Activated CD4-positive, alpha-beta memory T cell treated with anti-CD3 and anti-CD28 coated beads for 36 hours (primary cell): ENCODE measurements at regions of chr18 and their contacts with region 1.

Region 1: GRCh38 chr18:44725300-44726096 is 44.8 kb downstream of the SETBP1 start:
- DNase-seq: peak; percentile 83
- H3K4me3 Mint-ChIP-seq: peak overlapping the region; percentile 27
- H3K27ac Mint-ChIP-seq: peak overlapping the region; percentile 81
- H3K4me1 Mint-ChIP-seq: peaks cover 78% of the 10 kb centered on the region
- H3K27me3 Mint-ChIP-seq: no peaks in the 10 kb centered on the region

Region 2: DNA sequence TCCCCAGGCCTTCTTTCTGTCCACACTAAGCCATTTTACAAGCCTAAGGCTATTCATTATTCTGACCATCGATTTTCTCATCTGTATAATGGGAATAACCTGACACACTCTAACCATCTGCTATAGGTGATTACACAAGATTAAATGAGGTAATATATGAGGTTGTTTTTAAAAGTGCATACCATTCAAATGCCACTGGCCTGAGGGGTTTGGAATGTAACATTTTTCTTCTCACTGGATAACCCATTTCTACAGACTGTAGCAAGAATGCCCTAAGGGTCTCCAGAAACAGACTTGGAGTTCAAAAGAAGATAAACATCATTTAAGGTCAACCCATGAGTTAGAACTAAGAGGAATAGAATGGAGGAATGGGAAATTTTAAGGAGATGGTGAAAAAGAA is 156.5 kb before region 1 on chr18:
- CTCF ChIA-PET with region 1: no interaction called
- POLR2A ChIA-PET with region 1: no interaction called
- intact Hi-C with region 1: no loop called
- DNase-seq: no peak
- H3K4me3 Mint-ChIP-seq: no peak overlapping the region
- H3K27ac Mint-ChIP-seq: no peak overlapping the region
- H3K4me1 Mint-ChIP-seq: no peaks in the 10 kb centered on the region
- H3K27me3 Mint-ChIP-seq: peaks cover 4% of the 10 kb centered on the region

Region 3: GRCh38 chr18:44672506-44673051 is 52.9 kb before region 1 on chr18:
- CTCF ChIA-PET with region 1: no interaction called
- POLR2A ChIA-PET with region 1: no interaction called
- intact Hi-C with region 1: no loop called
- DNase-seq: no peak
- H3K4me3 Mint-ChIP-seq: no peak overlapping the region
- H3K27ac Mint-ChIP-seq: no peak overlapping the region
- H3K4me1 Mint-ChIP-seq: no peaks in the 10 kb centered on the region
- H3K27me3 Mint-ChIP-seq: peaks cover 51% of the 10 kb centered on the region

Region 4: DNA sequence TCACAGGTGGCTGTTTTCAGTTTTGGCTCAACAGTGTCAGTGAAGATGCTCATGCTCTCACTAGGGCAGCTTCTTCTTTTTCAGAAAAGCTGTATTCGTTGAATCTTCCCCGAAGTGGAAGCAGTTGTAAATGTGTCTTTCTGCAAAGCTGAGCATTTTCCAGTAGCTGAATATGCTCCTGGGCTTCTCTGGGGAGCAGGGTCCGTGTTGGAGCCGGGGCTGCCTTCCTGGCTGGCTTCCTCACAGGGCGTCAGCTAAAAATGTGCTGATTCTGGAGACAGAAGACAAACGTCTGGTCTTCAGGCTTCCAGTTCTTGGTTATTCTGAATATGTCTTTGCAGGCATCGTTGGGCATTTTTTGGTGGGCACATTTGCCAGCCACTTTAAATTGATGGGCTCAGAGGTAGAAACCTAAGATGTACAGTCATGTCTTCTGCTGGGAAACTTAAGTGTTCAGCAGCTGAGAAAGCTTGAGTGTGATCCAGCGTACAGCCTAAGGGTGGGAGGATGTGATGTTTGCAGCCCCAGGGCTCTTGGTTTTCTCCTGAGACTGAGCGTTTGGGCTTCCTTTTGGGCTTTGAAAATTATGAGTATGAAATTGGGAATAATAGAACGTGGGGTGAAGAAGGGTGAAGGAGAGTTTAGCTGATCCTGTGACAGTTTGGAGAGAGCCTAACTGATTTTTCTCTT is 25.8 kb before region 1 on chr18:
- CTCF ChIA-PET with region 1: interaction called, 8 read pairs
- POLR2A ChIA-PET with region 1: interaction called, 4 read pairs
- intact Hi-C with region 1: loop called (anchors 1 kb)
- DNase-seq: no peak
- H3K4me3 Mint-ChIP-seq: no peak overlapping the region
- H3K27ac Mint-ChIP-seq: no peak overlapping the region
- H3K4me1 Mint-ChIP-seq: peaks cover 15% of the 10 kb centered on the region
- H3K27me3 Mint-ChIP-seq: peaks cover 7% of the 10 kb centered on the region

Region 5: GRCh38 chr18:44799907-44800421 is 74.5 kb after region 1 on chr18:
- CTCF ChIA-PET with region 1: no interaction called
- POLR2A ChIA-PET with region 1: interaction called, 10 read pairs
- intact Hi-C with region 1: loop called (anchors 2 kb)
- DNase-seq: no peak
- H3K4me3 Mint-ChIP-seq: no peak overlapping the region
- H3K27ac Mint-ChIP-seq: no peak overlapping the region
- H3K4me1 Mint-ChIP-seq: peaks cover 43% of the 10 kb centered on the region
- H3K27me3 Mint-ChIP-seq: peaks cover 3% of the 10 kb centered on the region

Region 6: DNA sequence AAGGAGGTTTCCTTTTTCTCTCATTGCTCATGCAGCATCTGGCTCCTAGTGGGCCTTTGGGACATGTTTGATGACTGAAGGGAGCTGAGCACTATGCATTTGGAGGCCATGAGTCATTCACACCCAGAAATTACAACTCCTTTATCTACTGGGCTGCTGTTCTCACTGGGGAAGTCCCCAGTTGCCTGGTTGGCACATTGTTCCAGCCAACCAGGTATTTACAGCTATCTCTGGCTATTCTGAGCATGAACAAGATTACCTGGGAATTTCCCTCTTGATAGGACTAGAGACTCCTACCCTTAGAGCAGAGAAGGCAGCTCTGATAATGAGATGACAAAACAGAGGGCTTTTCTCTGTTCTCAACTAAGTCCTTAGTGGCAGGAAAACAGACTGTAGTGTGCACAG is 161.7 kb after region 1 on chr18:
- CTCF ChIA-PET with region 1: interaction called, 10 read pairs
- POLR2A ChIA-PET with region 1: interaction called, 16 read pairs
- intact Hi-C with region 1: loop called (anchors 1 kb)
- DNase-seq: peak; percentile 74
- H3K4me3 Mint-ChIP-seq: no peak overlapping the region
- H3K27ac Mint-ChIP-seq: peak overlapping the region; percentile 88
- H3K4me1 Mint-ChIP-seq: peaks cover 25% of the 10 kb centered on the region
- H3K27me3 Mint-ChIP-seq: peaks cover 3% of the 10 kb centered on the region

Region 7: DNA sequence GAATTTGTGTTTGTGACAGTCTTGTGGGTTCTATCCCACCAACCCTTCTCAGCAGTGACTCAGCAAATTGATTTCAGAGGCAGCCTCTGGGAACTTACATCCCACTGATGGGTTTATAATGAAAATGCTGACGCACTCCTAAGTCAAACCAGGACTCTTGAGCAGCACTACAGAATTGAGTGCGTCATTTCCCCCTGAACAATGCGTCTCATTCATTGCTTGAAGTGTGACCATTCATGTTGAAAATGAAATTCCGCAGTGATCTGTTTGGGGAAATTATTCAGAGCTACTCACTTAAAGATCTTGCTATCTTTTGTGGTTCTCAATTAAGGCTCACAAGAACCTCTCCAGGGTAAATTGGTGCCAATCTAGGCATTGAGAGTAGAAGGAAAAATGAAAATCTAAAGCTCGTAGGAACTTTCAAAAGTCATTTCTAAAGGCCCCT is 472.1 kb after region 1 on chr18:
- CTCF ChIA-PET with region 1: no interaction called
- POLR2A ChIA-PET with region 1: interaction called, 3 read pairs
- intact Hi-C with region 1: loop called (anchors 1 kb)
- DNase-seq: peak; percentile 60
- H3K4me3 Mint-ChIP-seq: no peak overlapping the region
- H3K27ac Mint-ChIP-seq: no peak overlapping the region
- H3K4me1 Mint-ChIP-seq: peaks cover 9% of the 10 kb centered on the region
- H3K27me3 Mint-ChIP-seq: peaks cover 21% of the 10 kb centered on the region